Calu3 (cell line): ENCODE measurements at regions of chr12 and their contacts with region 1.

Region 1: DNA sequence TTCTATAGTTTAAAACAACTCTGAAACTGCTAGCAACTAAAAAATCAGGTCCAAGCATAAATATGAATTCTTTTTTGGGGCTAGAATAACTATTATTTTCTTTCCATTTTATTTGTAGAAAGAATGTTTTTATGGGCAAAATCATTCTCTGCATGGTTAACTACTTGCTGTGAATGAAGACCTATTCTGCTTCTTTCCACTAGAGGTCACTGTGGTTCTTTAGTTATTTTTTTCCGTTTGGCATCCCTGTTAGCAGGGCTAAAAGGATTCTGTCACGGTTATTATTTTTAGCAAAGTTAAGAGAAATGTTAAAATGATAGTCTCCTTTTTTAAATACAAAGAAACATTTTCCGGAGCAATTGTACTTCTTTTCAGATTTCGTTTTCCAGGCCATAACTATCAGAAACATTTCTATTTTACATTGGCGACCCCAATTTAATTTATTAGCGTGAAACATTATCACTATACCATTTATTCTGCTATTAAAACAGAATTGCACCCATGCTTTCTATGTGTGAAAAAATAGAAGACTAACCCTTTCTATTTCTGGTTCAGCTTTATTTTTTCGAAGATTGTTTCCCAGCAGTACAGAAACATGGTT is 404.8 kb downstream of the ATP23 start:
- DNase-seq: no peak
- H3K4me3 Mint-ChIP-seq: no peak overlapping the region
- H3K27ac Mint-ChIP-seq: no peak overlapping the region
- H3K4me1 Mint-ChIP-seq: peaks cover 13% of the 10 kb centered on the region
- H3K27me3 Mint-ChIP-seq: no peaks in the 10 kb centered on the region
- CTCF ChIP-seq: peak; percentile 43

Region 2: GRCh38 chr12:58443273-58443980 is 97.3 kb after region 1 on chr12:
- CTCF ChIA-PET with region 1: interaction called, 4 read pairs
- intact Hi-C with region 1: loop called (anchors 1 kb)
- DNase-seq: peak; percentile 48
- H3K4me3 Mint-ChIP-seq: no peak overlapping the region
- H3K27ac Mint-ChIP-seq: no peak overlapping the region
- H3K4me1 Mint-ChIP-seq: no peaks in the 10 kb centered on the region
- H3K27me3 Mint-ChIP-seq: no peaks in the 10 kb centered on the region
- CTCF ChIP-seq: peak; percentile 45

Region 3: DNA sequence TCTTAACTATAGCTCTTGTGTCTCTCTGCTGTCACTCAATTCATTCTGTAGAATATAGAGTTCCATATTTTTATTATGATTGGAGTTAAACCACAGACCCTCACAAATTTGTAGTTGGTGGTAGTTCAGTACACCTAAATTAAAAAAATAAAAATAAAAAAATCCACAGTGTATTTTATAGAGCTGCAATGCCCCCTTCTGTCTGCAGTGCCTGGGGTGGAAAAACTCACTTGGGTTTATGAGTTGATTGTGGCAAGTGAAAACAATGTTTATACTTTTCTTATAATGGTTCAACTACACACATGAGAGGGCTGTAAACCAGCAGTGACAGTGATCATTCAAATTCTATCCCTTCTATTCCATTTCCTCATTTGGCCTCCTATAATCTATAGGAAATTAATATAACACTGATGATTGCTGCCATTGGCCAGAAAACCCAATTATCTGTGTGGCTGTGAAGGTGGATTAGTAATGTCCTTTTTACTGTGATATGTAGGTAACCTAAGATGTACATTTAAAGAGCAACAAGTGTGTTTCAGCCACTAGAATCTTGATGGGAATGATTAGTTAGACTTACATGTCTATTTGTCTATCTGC is 741.0 kb after region 1 on chr12:
- CTCF ChIA-PET with region 1: no interaction called
- intact Hi-C with region 1: loop called (anchors 2 kb)
- DNase-seq: no peak
- H3K4me3 Mint-ChIP-seq: no peak overlapping the region
- H3K27ac Mint-ChIP-seq: no peak overlapping the region
- H3K4me1 Mint-ChIP-seq: peaks cover 60% of the 10 kb centered on the region
- H3K27me3 Mint-ChIP-seq: no peaks in the 10 kb centered on the region
- CTCF ChIP-seq: peak; percentile 47

Region 4: GRCh38 chr12:59149997-59150642 is 804.0 kb after region 1 on chr12:
- CTCF ChIA-PET with region 1: no interaction called
- intact Hi-C with region 1: loop called (anchors 1 kb)
- DNase-seq: peak; percentile 53
- H3K4me3 Mint-ChIP-seq: no peak overlapping the region
- H3K27ac Mint-ChIP-seq: no peak overlapping the region
- H3K4me1 Mint-ChIP-seq: no peaks in the 10 kb centered on the region
- H3K27me3 Mint-ChIP-seq: no peaks in the 10 kb centered on the region
- CTCF ChIP-seq: peak; percentile 91